ENCODE measurements at regions of chr9 and their contacts with region 1.

Region 1: GRCh38 chr9:93962561-93963440 is 7.6 kb upstream of the BARX1 start:
- DNase-seq: peak; percentile 64 to 91 (median 76)
- ATAC-seq: peak; percentile 77
- H3K4me3 ChIP-seq: no peak overlapping the region
- H3K4me3 Mint-ChIP-seq: no peak overlapping the region
- H3K27ac ChIP-seq: no peak overlapping the region
- H3K27ac Mint-ChIP-seq: no peak overlapping the region
- H3K4me1 ChIP-seq: peaks cover 38% of the 10 kb centered on the region
- H3K4me1 Mint-ChIP-seq: peaks cover 40% of the 10 kb centered on the region
- H3K27me3 ChIP-seq: peaks cover 37 to 60% of the 10 kb centered on the region in 2 experiments
- H3K27me3 Mint-ChIP-seq: peaks cover 70% of the 10 kb centered on the region
- CTCF ChIP-seq: peak; percentile 79

Region 2: DNA sequence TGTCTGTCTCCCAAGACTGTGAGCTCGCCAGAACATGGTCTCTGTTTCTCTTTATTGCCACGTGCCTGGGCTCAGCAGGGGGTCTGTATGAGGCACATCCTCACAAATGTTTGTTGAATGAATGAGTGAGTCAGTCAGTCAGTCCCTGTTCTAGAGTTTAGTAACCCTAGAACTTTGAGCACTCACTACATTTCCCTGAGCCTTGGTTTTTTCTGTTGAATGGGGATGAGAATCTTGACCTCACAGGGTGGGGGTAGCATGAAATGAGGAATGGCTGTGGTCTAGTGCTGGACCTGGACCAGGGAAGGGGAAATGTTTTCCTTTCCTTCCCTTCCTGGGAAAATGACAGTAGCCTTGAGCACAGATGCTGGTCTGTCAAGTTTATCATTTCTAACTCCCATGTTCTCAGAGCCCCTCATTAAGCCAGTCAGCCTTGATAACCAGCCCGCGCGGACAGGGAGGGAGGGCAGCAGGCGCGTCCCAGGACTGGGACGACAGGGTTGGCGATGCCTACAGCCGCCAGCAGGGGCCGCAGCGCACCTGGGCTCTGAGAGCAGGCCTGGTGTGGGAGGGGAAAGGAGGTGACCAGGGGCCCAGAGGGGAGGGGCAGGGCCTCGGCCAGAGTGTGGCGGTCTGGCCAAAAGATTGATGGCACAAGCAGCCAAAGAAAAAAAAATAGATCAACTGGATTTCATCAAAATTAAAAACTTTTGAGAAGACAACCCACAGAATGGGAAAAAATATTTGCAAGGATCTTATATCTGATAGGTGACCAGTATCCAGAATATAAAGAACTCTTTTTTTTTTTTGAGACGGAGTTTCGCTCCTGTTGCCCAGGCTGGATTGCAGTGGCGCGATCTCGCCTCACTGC is 803.0 kb before region 1 on chr9:
- CTCF ChIA-PET with region 1: no interaction called
- POLR2A ChIA-PET with region 1: no interaction called
- intact Hi-C with region 1: loop called (anchors 2 to 5 kb)
- DNase-seq: peak; percentile 41 to 81 (median 63)
- ATAC-seq: peak; percentile 89
- H3K4me3 ChIP-seq: no peak overlapping the region
- H3K4me3 Mint-ChIP-seq: no peak overlapping the region
- H3K27ac ChIP-seq: no peak overlapping the region
- H3K27ac Mint-ChIP-seq: no peak overlapping the region
- H3K4me1 ChIP-seq: peaks cover 15% of the 10 kb centered on the region
- H3K4me1 Mint-ChIP-seq: peaks cover 14% of the 10 kb centered on the region
- H3K27me3 ChIP-seq: no peaks in the 10 kb centered on the region
- H3K27me3 Mint-ChIP-seq: no peaks in the 10 kb centered on the region
- CTCF ChIP-seq: peak; percentile 96

Region 3: DNA sequence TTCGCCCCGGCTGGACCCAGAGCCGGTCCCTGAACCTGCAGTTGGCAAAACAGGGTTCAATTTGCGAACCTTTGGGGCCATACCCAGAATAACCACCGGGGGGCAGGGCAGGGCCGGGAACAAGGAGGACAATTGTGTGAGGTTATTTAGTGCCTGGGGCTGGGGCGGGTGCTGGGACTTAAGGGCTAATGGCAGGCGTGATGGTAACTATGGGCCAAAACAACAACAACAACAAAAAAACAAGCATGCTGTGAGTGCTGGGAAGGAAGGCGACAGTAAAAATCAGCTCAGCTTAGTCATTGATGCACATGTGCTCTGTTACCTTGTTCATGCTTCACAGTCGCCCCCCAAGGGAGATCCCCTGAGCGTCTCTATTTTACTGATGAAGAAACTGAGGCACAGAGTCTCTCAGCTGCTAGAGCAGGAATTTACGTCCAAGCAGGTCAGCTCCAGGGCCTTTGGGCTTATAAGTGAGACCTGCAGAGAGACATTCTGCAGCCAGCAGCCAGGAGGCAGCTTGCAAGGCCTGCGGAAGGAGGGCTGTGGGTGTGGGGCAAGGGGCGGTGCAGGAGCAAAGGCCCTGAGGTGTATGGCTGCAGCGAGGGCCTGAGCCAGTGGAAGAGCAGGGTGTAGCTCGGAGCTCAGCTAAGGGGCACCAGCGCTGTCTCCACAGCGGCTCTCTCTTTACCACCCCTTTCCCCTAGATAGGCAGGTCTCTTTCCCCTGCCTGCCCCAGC is 280.4 kb before region 1 on chr9:
- CTCF ChIA-PET with region 1: interaction called, 4 read pairs
- POLR2A ChIA-PET with region 1: no interaction called
- intact Hi-C with region 1: loop called in 1 of 2 experiments (anchors 1 kb)
- DNase-seq: peak; percentile 32 to 72 (median 53)
- ATAC-seq: peak; percentile 68
- H3K4me3 ChIP-seq: no peak overlapping the region
- H3K4me3 Mint-ChIP-seq: no peak overlapping the region
- H3K27ac ChIP-seq: no peak overlapping the region
- H3K27ac Mint-ChIP-seq: no peak overlapping the region
- H3K4me1 ChIP-seq: peaks cover 6% of the 10 kb centered on the region
- H3K4me1 Mint-ChIP-seq: no peaks in the 10 kb centered on the region
- H3K27me3 ChIP-seq: peaks cover 0 to 2% of the 10 kb centered on the region in 2 experiments
- H3K27me3 Mint-ChIP-seq: peaks cover 7% of the 10 kb centered on the region
- CTCF ChIP-seq: peak; percentile 69

Region 4: DNA sequence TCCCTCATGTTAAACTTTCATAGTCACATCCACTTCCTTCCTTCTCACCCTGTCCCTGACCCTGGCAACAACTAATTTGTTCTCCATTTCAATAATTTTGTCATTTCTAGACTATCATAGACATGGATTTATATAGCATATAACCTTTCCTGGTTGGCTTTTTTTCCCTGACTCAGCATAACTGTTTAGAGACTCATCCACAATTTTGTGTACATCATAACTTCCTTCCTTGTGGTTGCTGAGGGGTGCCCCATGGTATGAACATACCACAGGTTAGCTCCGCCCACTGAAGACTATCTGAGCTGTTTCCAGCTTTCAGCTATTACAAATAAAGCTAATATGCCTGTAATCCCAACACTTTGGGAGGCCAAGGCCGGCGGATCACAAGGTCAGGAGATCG is 249.1 kb before region 1 on chr9:
- CTCF ChIA-PET with region 1: no interaction called
- POLR2A ChIA-PET with region 1: no interaction called
- intact Hi-C with region 1: no loop called
- DNase-seq: no peak
- ATAC-seq: no peak
- H3K4me3 ChIP-seq: no peak overlapping the region
- H3K4me3 Mint-ChIP-seq: no peak overlapping the region
- H3K27ac ChIP-seq: no peak overlapping the region
- H3K27ac Mint-ChIP-seq: no peak overlapping the region
- H3K4me1 ChIP-seq: no peaks in the 10 kb centered on the region
- H3K4me1 Mint-ChIP-seq: no peaks in the 10 kb centered on the region
- H3K27me3 ChIP-seq: no peaks in the 10 kb centered on the region
- H3K27me3 Mint-ChIP-seq: peaks cover 22% of the 10 kb centered on the region
- CTCF ChIP-seq: no peak

Region 5: GRCh38 chr9:93827545-93828330 is 135.1 kb before region 1 on chr9:
- CTCF ChIA-PET with region 1: interaction called, 4 read pairs
- POLR2A ChIA-PET with region 1: no interaction called
- intact Hi-C with region 1: loop called (anchors 2 kb)
- DNase-seq: peak in 4 of 14 experiments; percentile 24 to 52 (median 39)
- ATAC-seq: peak; percentile 52
- H3K4me3 ChIP-seq: no peak overlapping the region
- H3K4me3 Mint-ChIP-seq: no peak overlapping the region
- H3K27ac ChIP-seq: no peak overlapping the region
- H3K27ac Mint-ChIP-seq: no peak overlapping the region
- H3K4me1 ChIP-seq: peaks cover 14% of the 10 kb centered on the region
- H3K4me1 Mint-ChIP-seq: peaks cover 13% of the 10 kb centered on the region
- H3K27me3 ChIP-seq: peaks cover 21 to 60% of the 10 kb centered on the region in 2 experiments
- H3K27me3 Mint-ChIP-seq: peaks cover 78% of the 10 kb centered on the region
- CTCF ChIP-seq: peak; percentile 46

Measured in CD4-positive, alpha-beta T cell (primary cell).